Activated CD4-positive, alpha-beta T cell treated with anti-CD3 and anti-CD28 coated beads, Interleukin-2, amount 10 ng/mL, durations not matched to agents 24 days and 14 days (primary cell): ENCODE measurements at regions of chr10 and their contacts with region 1.

Region 1: DNA sequence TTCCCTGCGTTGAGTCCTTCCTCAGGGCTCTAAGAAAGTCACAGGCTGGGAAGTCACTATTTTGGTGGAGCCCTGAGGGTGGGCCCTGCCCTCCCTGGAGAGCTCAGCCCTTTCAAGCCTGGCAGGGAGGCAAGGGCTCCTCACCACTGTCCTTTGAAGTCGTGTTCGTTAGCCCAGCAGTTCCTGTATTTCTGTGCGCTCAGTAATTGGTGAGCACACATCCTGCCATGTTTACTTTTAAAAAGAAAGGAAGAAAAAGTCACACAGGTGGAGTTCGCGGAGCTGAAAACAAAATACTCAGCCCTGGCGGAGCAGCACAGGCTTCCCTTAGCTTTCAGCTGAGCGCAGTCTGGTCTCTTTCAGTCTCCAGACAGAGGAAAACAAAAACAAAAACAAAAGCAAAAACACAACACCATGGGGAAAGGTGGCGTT is 37.1 kb downstream of the PRKCQ start:
- DNase-seq: peak; percentile 90
- H3K4me3 Mint-ChIP-seq: peak overlapping the region; percentile 87
- H3K27ac Mint-ChIP-seq: peak overlapping the region; percentile 99
- H3K4me1 Mint-ChIP-seq: peaks cover 66% of the 10 kb centered on the region
- H3K27me3 Mint-ChIP-seq: no peaks in the 10 kb centered on the region

Region 2: DNA sequence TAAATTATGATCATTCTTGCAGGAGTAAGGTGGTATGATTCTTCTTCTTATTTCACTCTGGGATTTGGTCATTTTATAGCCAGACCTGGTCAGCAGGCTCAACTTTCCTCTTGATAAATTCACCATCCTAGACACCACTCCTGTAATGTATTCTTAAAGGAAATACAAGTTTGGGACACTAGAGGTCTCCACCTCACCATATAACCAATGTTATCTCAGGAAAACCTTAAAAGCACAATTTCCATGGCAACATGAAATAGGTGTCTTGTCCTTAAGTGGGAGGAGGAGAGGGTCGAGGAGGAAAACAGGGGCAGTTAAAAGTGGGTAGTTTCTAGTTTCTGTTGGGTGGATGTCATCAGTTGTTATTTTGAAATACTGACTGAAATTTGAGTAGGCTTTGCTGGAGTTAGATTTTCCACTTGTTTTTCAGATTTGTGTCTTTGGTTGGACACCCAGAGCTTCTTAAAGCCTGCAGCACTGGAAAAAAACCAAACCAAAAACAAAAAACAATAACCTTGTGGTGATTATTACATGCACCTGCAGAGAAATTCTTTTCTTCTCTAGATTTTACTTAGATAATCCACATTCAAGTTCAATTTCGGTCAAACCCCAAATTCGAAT is 126.0 kb before region 1 on chr10:
- intact Hi-C with region 1: loop called (anchors 1 kb)
- DNase-seq: peak; percentile 79
- H3K4me3 Mint-ChIP-seq: no peak overlapping the region
- H3K27ac Mint-ChIP-seq: no peak overlapping the region
- H3K4me1 Mint-ChIP-seq: peaks cover 7% of the 10 kb centered on the region
- H3K27me3 Mint-ChIP-seq: no peaks in the 10 kb centered on the region

Region 3: GRCh38 chr10:6473901-6474370 is 69.1 kb before region 1 on chr10:
- intact Hi-C with region 1: loop called (anchors 1 kb)
- DNase-seq: peak; percentile 82
- H3K4me3 Mint-ChIP-seq: peak overlapping the region; percentile 85
- H3K27ac Mint-ChIP-seq: peak overlapping the region; percentile 96
- H3K4me1 Mint-ChIP-seq: peaks cover 54% of the 10 kb centered on the region
- H3K27me3 Mint-ChIP-seq: no peaks in the 10 kb centered on the region

Region 4: GRCh38 chr10:6507311-6507710 is 35.7 kb before region 1 on chr10:
- intact Hi-C with region 1: loop called (anchors 1 kb)
- DNase-seq: peak; percentile 84
- H3K4me3 Mint-ChIP-seq: peak overlapping the region; percentile 64
- H3K27ac Mint-ChIP-seq: peak overlapping the region; percentile 86
- H3K4me1 Mint-ChIP-seq: peaks cover 52% of the 10 kb centered on the region
- H3K27me3 Mint-ChIP-seq: no peaks in the 10 kb centered on the region

Region 5: DNA sequence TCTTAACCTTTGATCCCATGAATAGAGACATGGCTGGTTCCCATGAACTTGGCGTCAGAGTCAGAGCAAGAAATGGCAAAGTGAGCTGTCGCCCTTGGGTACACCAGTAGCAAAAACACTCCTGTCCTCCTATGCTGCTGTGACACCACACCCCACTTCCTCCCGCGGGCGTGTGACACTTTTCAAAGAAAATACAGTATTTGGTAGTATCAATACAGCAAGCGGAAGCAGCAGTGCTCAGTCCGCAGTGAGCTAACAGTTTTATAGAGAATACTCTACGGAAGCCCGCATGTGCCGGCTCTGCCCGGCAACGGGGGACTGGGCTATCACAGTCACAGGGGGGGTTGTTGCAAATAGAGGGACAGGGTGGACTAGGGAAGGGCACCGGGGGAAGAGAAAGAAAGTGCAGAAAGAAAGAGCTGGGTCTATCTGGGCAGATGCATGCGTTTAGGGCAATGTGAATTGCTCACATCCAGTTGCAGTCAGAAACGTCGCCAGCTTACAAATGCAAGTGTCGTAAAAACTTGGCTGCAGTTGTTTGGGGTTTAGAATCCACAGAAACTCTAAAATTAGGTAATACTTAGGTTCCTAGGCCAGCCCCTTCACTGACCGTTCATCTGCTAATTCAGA is 12.7 kb before region 1 on chr10:
- intact Hi-C with region 1: loop called (anchors 1 kb)
- DNase-seq: peak; percentile 94
- H3K4me3 Mint-ChIP-seq: peak overlapping the region; percentile 89
- H3K27ac Mint-ChIP-seq: peak overlapping the region; percentile 99
- H3K4me1 Mint-ChIP-seq: peaks cover 78% of the 10 kb centered on the region
- H3K27me3 Mint-ChIP-seq: no peaks in the 10 kb centered on the region

Region 6: GRCh38 chr10:6647811-6648526 is 105.0 kb after region 1 on chr10:
- intact Hi-C with region 1: loop called (anchors 1 kb)
- DNase-seq: peak; percentile 91
- H3K4me3 Mint-ChIP-seq: no peak overlapping the region
- H3K27ac Mint-ChIP-seq: no peak overlapping the region
- H3K4me1 Mint-ChIP-seq: peaks cover 44% of the 10 kb centered on the region
- H3K27me3 Mint-ChIP-seq: no peaks in the 10 kb centered on the region